Activated CD4-positive, alpha-beta memory T cell treated with anti-CD3 and anti-CD28 coated beads for 36 hours (primary cell): ENCODE measurements at regions of chr11 and their contacts with region 1.

Region 1: DNA sequence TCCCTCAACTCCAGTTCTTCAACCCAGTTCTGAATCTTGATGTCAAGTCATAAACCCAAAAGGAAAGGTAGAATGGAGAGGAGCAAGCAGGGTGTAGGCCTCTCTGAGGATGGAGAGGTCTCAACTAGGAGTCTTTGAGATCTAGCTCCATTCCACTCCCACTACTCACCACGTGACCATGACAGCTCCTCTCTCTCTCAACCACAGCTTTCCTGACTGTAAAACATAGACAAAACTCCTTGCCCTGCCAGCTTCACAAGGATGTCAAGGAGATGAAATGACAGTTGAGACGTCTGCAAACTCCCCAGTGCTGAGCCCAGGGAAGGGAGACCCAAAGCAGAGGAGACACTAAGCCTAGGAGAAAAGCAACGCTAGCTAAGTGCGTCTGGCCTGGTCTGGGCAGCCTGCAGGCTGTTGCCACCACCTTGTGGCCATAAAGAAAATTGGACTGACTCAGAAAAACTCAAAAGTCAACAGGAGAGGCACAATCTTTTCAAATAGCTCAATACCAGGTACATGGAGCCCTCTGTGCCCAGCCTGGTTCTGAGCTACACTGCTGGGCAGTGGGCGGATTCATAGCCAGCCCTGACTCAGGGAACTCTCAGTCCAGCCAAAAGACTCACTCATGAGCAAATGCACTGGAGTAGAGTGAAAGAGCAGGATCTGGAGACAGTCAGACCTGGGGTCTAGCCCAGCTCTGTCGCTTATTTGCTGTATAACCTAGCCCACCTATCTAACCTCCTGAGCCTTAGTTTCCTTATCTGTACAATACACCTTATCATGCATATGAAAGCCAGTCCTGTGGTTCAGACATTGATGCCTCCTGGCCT is 3.4 kb downstream of the CLPB start:
- DNase-seq: peak; percentile 51
- H3K4me3 Mint-ChIP-seq: no peak overlapping the region
- H3K27ac Mint-ChIP-seq: no peak overlapping the region
- H3K4me1 Mint-ChIP-seq: peaks cover 30% of the 10 kb centered on the region
- H3K27me3 Mint-ChIP-seq: no peaks in the 10 kb centered on the region

Region 2: GRCh38 chr11:71977743-71978418 is 453.1 kb before region 1 on chr11:
- CTCF ChIA-PET with region 1: interaction called, 10 read pairs
- POLR2A ChIA-PET with region 1: no interaction called
- intact Hi-C with region 1: no loop called
- DNase-seq: peak; percentile 55
- H3K4me3 Mint-ChIP-seq: no peak overlapping the region
- H3K27ac Mint-ChIP-seq: no peak overlapping the region
- H3K4me1 Mint-ChIP-seq: peaks cover 3% of the 10 kb centered on the region
- H3K27me3 Mint-ChIP-seq: no peaks in the 10 kb centered on the region

Region 3: DNA sequence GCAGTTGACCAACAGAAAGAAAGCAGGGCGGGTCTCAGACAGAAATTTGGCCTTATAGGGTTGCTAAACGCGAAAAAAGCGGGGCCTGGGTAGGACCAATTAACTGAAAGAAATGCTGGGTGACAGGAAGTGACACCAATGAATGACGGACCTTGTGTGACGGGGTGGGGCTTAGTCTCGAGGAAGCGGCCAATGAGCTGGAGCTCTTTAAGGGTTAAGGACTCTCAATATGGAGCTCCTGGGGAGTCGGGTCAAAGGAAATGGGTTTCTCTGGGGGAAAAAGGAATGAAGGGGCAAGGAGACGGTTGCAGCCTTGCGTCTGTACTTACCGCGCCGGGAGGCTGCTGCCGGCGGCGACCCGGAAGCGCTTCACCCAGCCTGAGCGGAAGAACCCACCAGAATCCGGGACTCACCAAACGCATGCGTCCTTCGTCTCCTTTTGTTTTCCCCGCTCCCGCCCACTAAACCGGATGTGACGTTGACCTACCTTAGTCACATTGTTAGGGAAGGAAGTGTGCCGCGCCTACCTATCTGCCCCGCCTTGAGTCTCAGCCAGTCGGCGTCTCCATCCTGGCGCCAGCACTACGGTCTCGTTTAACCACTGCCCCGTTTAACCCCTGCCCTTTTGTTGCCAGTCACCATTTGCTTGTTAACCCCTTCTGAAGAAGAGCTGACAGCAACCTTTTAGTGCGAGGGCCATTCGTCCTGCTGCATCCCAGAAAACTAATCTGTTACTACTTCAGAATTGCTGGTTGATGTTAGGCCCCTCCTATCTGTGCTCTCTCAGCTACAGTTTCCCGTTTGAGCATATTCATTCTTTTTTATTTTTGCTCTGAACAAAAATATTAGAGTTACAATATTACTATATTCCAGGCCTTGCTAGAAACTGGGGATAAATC is 318.4 kb before region 1 on chr11 and contains the start of gene ANAPC15:
- CTCF ChIA-PET with region 1: no interaction called
- POLR2A ChIA-PET with region 1: no interaction called
- intact Hi-C with region 1: loop called (anchors 1 kb)
- DNase-seq: peak; percentile 100
- H3K4me3 Mint-ChIP-seq: peak within 1 kb of the TSS; percentile 93
- H3K27ac Mint-ChIP-seq: peak within 1 kb of the TSS; percentile 100
- H3K4me1 Mint-ChIP-seq: peaks cover 18% of the 10 kb centered on the region
- H3K27me3 Mint-ChIP-seq: no peaks in the 10 kb centered on the region
- total RNA-seq, gene ANAPC15: 62.6 to 64.2 TPM

Region 4: GRCh38 chr11:72293910-72294615 is 136.9 kb before region 1 on chr11:
- CTCF ChIA-PET with region 1: interaction called, 55 read pairs
- POLR2A ChIA-PET with region 1: no interaction called
- intact Hi-C with region 1: loop called (anchors 5 kb)
- DNase-seq: no peak
- H3K4me3 Mint-ChIP-seq: no peak overlapping the region
- H3K27ac Mint-ChIP-seq: no peak overlapping the region
- H3K4me1 Mint-ChIP-seq: no peaks in the 10 kb centered on the region
- H3K27me3 Mint-ChIP-seq: no peaks in the 10 kb centered on the region

Region 5: GRCh38 chr11:72413914-72414628 is 16.9 kb before region 1 on chr11:
- CTCF ChIA-PET with region 1: interaction called, 73 read pairs
- POLR2A ChIA-PET with region 1: no interaction called
- intact Hi-C with region 1: loop called (anchors 2 kb)
- DNase-seq: peak; percentile 89
- H3K4me3 Mint-ChIP-seq: no peak overlapping the region
- H3K27ac Mint-ChIP-seq: no peak overlapping the region
- H3K4me1 Mint-ChIP-seq: peaks cover 18% of the 10 kb centered on the region
- H3K27me3 Mint-ChIP-seq: no peaks in the 10 kb centered on the region